ENCODE measurements at regions of chr12 and their contacts with region 1.

Region 1: GRCh38 chr12:124694846-124695497 is 127.6 kb upstream of the NCOR2 start:
- DNase-seq: peak; percentile 71 to 89
- ATAC-seq: peak; percentile 58
- H3K4me3 ChIP-seq: no peak overlapping the region
- H3K27ac ChIP-seq: no peak overlapping the region
- H3K4me1 ChIP-seq: no peaks in the 10 kb centered on the region
- H3K27me3 ChIP-seq: no peaks in the 10 kb centered on the region

Region 2: GRCh38 chr12:124469193-124469888 is 225.6 kb before region 1 on chr12:
- intact Hi-C with region 1: no loop called
- DNase-seq: no peak
- ATAC-seq: no peak
- H3K4me3 ChIP-seq: no peak overlapping the region
- H3K27ac ChIP-seq: no peak overlapping the region
- H3K4me1 ChIP-seq: no peaks in the 10 kb centered on the region
- H3K27me3 ChIP-seq: no peaks in the 10 kb centered on the region

Region 3: DNA sequence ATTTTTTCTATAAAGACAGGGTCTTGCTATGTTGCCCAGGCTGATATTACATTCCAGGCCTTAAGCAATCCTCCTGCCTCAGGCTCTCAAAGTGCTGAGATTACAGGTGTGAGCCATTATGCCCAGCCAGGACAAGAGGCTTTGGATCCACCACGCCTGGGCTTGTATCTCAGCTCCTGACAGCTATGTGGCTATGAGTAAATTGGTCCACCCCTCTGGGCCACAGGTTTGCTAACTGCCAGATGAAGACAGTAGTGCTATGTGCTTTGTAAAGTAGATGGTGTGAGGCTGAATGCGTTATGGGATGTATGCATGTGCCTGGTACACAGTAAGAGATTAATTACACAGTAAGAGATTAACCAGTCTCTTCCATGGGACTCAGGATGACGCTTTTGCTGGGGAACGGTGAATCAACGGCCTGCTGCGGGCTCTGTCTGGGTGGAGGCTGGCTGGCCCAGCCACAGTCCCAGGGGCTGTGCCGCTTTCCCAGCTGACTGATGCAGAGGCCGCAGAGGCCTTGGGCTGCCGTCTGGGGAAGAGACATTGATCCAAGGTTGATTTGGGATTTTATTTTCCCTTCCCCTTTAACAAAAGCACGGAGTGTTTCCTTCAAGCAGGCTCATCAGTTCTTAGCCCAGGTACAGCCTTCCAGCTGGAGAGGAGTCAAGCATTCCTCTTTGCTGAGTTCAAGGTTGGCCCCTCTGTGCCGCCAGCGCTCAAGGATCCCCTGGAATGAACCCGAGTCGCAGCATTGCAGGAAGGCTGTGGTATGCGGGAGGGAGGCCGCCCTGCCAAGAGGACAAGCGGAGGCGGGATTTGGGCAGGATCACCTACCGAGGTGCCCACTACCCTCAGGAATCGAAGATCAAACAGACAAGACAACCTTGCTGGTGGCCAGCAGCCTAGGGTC is 74.0 kb before region 1 on chr12:
- intact Hi-C with region 1: loop called in 1 of 2 experiments (anchors 5 kb)
- DNase-seq: peak; percentile 86 to 90
- ATAC-seq: peak; percentile 71
- H3K4me3 ChIP-seq: no peak overlapping the region
- H3K27ac ChIP-seq: peak overlapping the region in 1 of 2 donors; percentile 68
- H3K4me1 ChIP-seq: no peaks in the 10 kb centered on the region
- H3K27me3 ChIP-seq: no peaks in the 10 kb centered on the region

Region 4: DNA sequence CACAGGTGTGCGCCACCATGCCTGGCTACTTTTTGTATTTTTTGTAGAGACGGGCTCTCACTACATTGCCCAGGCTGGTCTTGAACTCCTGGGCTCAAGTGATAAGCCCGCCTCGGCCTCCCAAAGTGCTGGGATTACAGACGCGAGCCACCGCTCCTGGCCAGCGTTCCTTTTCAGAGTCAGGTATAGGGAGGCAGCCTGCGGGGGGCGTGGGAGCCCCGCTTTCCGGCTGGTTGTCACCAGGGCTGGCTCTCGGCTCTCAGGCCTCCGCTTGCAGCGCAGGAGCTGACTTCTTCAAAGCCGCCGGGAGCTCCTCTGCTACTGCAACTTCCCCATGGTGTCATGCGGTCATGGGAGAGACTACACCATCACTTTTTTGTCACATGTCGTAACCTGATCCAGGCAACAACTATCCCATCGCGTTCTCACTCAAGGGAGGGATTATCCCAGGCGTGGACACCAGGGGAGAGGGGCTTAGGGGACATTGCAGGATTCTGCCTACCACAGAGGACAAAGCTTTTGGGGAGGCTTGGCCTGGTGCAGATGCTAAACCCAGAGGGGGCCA is 39.3 kb after region 1 on chr12:
- intact Hi-C with region 1: loop called in 1 of 2 experiments (anchors 5 kb)
- DNase-seq: peak in 1 of 2 donors; percentile 87
- ATAC-seq: peak; percentile 39
- H3K4me3 ChIP-seq: no peak overlapping the region
- H3K27ac ChIP-seq: no peak overlapping the region
- H3K4me1 ChIP-seq: no peaks in the 10 kb centered on the region
- H3K27me3 ChIP-seq: no peaks in the 10 kb centered on the region

Region 5: DNA sequence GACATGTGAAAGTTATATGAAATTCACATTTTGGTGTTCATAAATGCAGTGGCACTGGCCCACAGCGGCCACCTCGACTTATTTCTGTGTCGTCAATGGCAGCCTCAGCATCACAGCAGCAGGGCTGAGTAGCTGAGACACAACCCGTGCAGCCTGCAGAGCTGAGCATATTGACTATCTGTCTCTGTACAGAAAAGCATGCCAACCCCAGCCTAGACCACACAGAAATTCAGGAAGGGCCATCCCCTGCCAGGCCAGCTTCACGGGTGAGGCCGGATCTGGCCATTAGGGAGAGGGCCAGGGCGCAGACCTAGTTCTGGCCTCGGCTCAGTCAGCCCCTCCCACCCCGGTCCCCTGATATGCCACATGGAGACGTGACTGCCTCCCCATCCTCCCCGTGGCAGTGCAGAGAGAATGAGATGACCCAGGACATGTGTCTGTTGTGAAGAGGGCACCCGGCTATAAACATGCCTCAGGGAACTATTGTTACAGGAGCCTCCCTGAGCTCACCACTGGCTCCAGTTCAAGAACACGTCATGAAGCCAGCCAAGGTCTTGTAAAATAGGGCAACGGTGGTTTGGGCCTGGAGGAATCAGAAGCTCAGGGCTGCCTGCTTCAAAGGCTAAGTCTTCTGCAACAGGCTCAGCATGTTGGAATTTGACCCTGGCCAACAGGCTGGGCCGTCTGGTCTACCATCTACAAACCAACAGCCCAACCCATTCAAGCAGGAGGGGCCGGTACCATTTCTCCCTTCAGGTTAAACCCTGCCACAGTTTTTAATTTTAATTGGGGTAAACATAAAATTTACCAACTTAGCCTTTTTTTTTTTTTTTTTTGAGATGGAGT is 143.2 kb after region 1 on chr12:
- intact Hi-C with region 1: no loop called
- DNase-seq: peak in 1 of 2 donors; percentile 76
- ATAC-seq: peak; percentile 58
- H3K4me3 ChIP-seq: no peak overlapping the region
- H3K27ac ChIP-seq: no peak overlapping the region
- H3K4me1 ChIP-seq: no peaks in the 10 kb centered on the region
- H3K27me3 ChIP-seq: no peaks in the 10 kb centered on the region